ENCODE measurements at regions of chr4 and their contacts with region 1.

Region 1: GRCh38 chr4:93178290-93178689 is 650.3 kb upstream of the ATOH1 start:
- DNase-seq: no peak
- H3K4me3 ChIP-seq: no peak overlapping the region
- H3K27me3 ChIP-seq: no peaks in the 10 kb centered on the region
- CTCF ChIP-seq: no peak

Region 2: GRCh38 chr4:92872604-92873003 is 305.7 kb before region 1 on chr4:
- CTCF ChIA-PET with region 1: no interaction called
- POLR2A ChIA-PET with region 1: interaction called, 11 read pairs
- DNase-seq: no peak
- H3K4me3 ChIP-seq: no peak overlapping the region
- H3K27me3 ChIP-seq: no peaks in the 10 kb centered on the region
- CTCF ChIP-seq: no peak